ENCODE measurements at regions of chr17 and their contacts with region 1.

Region 1: DNA sequence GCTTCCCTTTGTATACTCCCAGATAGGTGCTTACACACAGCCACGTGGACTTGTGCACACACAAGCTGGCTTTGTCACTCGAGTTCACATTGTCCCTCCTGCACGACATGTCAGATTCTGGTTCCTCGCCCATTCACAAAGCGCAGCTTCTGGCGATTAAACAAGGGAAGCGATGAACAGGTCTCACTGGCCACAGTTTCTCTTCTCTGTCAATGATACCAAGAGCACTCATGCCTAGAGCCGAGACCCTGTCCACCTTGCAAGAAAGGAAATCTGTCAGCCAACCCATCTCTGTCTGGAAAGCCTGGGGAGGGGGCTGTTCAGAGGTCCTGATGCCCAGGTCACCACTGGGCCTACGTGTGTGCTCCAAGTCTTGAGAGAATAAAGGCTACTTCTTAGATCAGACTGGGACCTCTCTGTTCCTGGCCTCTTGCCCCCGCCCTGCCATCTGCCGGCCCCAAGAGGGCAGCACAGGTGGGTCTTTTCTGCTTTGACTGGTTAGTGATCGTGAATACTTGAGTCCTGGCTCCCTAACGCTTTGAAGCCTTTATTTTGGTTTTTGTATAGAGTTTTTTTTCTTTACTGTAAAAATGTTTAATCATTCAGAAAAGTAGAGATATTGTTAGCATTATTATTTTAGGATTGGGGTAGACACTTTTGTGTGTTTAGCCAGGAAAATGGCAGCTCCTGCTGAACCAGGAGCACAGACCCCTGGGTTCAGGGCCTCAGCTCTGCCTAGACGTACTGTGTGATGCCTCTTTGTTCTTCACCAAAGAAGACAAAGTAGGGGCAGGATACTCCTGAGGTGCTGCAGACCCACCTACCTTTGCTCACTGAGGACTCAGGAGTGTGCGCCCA is 104.7 kb downstream of the MRM1 start:
- DNase-seq: peak; percentile 70
- ATAC-seq: peak; percentile 88
- H3K4me3 Mint-ChIP-seq: no peak overlapping the region
- H3K27ac Mint-ChIP-seq: no peak overlapping the region
- H3K4me1 Mint-ChIP-seq: no peaks in the 10 kb centered on the region
- H3K27me3 Mint-ChIP-seq: peaks cover 19% of the 10 kb centered on the region

Region 2: GRCh38 chr17:36629252-36629847 is 76.8 kb before region 1 on chr17:
- CTCF ChIA-PET with region 1: interaction called, 18 read pairs
- POLR2A ChIA-PET with region 1: no interaction called
- DNase-seq: peak; percentile 83
- ATAC-seq: peak; percentile 83
- H3K4me3 Mint-ChIP-seq: no peak overlapping the region
- H3K27ac Mint-ChIP-seq: no peak overlapping the region
- H3K4me1 Mint-ChIP-seq: no peaks in the 10 kb centered on the region
- H3K27me3 Mint-ChIP-seq: peaks cover 14% of the 10 kb centered on the region

Region 3: GRCh38 chr17:36722121-36722902 is 16.2 kb after region 1 on chr17:
- CTCF ChIA-PET with region 1: interaction called, 20 read pairs
- POLR2A ChIA-PET with region 1: no interaction called
- DNase-seq: peak; percentile 84
- ATAC-seq: peak; percentile 94
- H3K4me3 Mint-ChIP-seq: peak overlapping the region; percentile 73
- H3K27ac Mint-ChIP-seq: peak overlapping the region; percentile 95
- H3K4me1 Mint-ChIP-seq: peaks cover 61% of the 10 kb centered on the region
- H3K27me3 Mint-ChIP-seq: peaks cover 4% of the 10 kb centered on the region

Region 4: DNA sequence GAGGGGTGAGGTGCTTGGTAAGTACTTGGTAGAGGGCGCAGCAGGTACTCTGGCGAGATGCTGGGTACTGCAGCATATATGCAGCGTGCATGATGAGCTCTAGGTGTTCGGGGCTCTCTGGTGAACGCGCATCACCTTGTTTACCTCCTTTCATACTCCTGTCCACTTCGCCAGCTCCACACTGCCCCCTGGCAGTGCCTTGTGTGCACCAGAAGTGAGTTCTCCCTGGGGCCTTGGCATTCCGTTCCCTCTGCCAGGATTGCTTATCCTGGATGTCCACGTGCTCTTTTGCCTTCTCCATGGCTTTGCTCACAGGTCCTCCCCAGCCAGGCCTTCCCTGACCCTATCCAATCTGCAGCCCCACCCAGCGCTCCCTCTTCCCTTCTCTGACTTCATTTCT is 49.5 kb after region 1 on chr17:
- CTCF ChIA-PET with region 1: interaction called, 13 read pairs
- POLR2A ChIA-PET with region 1: no interaction called
- DNase-seq: peak; percentile 57
- ATAC-seq: peak; percentile 47
- H3K4me3 Mint-ChIP-seq: no peak overlapping the region
- H3K27ac Mint-ChIP-seq: no peak overlapping the region
- H3K4me1 Mint-ChIP-seq: no peaks in the 10 kb centered on the region
- H3K27me3 Mint-ChIP-seq: peaks cover 3% of the 10 kb centered on the region

Region 5: GRCh38 chr17:36793976-36794375 is 87.9 kb after region 1 on chr17:
- CTCF ChIA-PET with region 1: no interaction called
- POLR2A ChIA-PET with region 1: no interaction called
- DNase-seq: no peak
- ATAC-seq: no peak
- H3K4me3 Mint-ChIP-seq: no peak overlapping the region
- H3K27ac Mint-ChIP-seq: no peak overlapping the region
- H3K4me1 Mint-ChIP-seq: no peaks in the 10 kb centered on the region
- H3K27me3 Mint-ChIP-seq: peaks cover 25% of the 10 kb centered on the region

Measured in activated CD8-positive, alpha-beta T cell treated with anti-CD3 and anti-CD28 coated beads, Interleukin-2, amount 10 ng/mL, durations not matched to agents 7 days and 5 days (primary cell).